ENCODE measurements at regions of chr11 and their contacts with region 1.

Region 1: DNA sequence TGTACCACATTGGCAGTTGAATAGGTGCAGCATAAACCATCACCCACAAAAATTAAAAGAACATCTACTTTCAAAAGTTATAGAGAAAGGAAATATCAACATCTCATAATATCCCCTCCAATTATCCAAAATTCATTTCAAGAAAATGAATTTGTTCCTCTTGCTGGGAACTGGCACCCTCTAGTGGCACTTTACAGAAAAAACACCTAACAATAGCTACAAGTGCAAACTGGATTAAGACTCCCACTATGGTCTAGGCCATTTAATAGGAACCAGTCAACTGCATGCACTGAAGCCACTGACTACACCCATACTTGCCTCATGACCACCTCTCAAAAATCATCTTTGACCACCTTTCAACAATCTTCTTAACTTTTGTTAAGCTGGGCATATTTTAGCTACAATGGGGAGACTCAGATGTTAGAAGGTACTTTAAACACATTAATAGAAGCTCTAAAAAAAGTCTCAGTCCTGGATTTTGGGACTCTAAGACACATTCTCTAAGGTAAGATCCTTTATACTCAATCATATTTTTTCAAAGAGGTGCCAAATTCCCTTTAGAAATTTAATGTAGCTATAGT is 17.3 kb downstream of the TRAF6 start:
- DNase-seq: peak; percentile 45 to 71 (median 52)
- ATAC-seq: peak; percentile 83
- H3K4me3 ChIP-seq: no peak overlapping the region
- H3K27ac ChIP-seq: no peak overlapping the region
- H3K4me1 ChIP-seq: no peaks in the 10 kb centered on the region
- H3K27me3 ChIP-seq: no peaks in the 10 kb centered on the region
- CTCF ChIP-seq: peak; percentile 52 to 81 (median 71); a peak in 5 of 6 replicates
- EP300 ChIP-seq: no peak
- POLR2A ChIP-seq: no peak
- RAD21 ChIP-seq: peak; percentile 64 to 81

Region 2: GRCh38 chr11:36306888-36307287 is 185.9 kb before region 1 on chr11:
- CTCF ChIA-PET with region 1: interaction called, 3 read pairs
- POLR2A ChIA-PET with region 1: no interaction called
- in situ Hi-C with region 1: loop called (anchors 5 kb)
- intact Hi-C with region 1: loop called (anchors 5 kb)
- DNase-seq: peak in 1 of 4 experiments; percentile 31
- ATAC-seq: 0 out of 3 replicates have a peak, but pooled peaks have one; percentile 31
- H3K4me3 ChIP-seq: no peak overlapping the region
- H3K27ac ChIP-seq: no peak overlapping the region
- H3K4me1 ChIP-seq: no peaks in the 10 kb centered on the region
- H3K27me3 ChIP-seq: no peaks in the 10 kb centered on the region
- CTCF ChIP-seq: peak; percentile 28 to 56 (median 36); a peak in 3 of 6 replicates
- EP300 ChIP-seq: no peak
- POLR2A ChIP-seq: no peak
- RAD21 ChIP-seq: peak; percentile 69

Region 3: DNA sequence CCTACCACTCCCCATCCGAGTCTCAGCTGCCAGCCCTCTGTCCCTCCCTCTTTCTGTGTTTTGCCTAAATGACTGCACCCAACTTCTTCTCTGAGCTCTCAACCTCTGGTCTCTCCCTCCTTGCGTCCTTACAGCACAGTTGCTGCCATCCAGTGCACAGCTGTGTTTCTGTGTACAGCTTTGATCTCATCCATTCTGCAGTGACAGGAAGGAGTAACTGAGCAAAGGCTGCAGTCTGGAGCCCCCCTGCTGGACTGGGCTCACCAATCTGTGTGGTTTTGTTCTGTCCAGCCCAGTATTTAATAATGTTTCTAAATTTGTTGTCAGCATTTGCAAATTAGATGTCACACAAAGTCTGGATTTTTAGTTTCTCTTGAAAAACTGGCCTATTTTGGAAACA is 152.9 kb before region 1 on chr11:
- CTCF ChIA-PET with region 1: no interaction called
- POLR2A ChIA-PET with region 1: no interaction called
- in situ Hi-C with region 1: no loop called
- intact Hi-C with region 1: loop called (anchors 1 kb)
- DNase-seq: no peak
- ATAC-seq: no peak
- H3K4me3 ChIP-seq: no peak overlapping the region
- H3K27ac ChIP-seq: no peak overlapping the region
- H3K4me1 ChIP-seq: no peaks in the 10 kb centered on the region
- H3K27me3 ChIP-seq: peaks cover 9 to 31% of the 10 kb centered on the region in 2 experiments; a peak in 3 of 5 replicates
- CTCF ChIP-seq: no peak
- EP300 ChIP-seq: no peak
- POLR2A ChIP-seq: no peak
- RAD21 ChIP-seq: no peak

Region 4: GRCh38 chr11:36385121-36385970 is 107.5 kb before region 1 on chr11:
- CTCF ChIA-PET with region 1: no interaction called
- POLR2A ChIA-PET with region 1: no interaction called
- in situ Hi-C with region 1: no loop called
- intact Hi-C with region 1: no loop called
- DNase-seq: no peak
- ATAC-seq: no peak
- H3K4me3 ChIP-seq: no peak overlapping the region
- H3K27ac ChIP-seq: no peak overlapping the region
- H3K4me1 ChIP-seq: peaks cover 0 to 4% of the 10 kb centered on the region in 2 experiments; a peak in 1 of 5 replicates
- H3K27me3 ChIP-seq: peaks cover 0 to 5% of the 10 kb centered on the region in 2 experiments
- CTCF ChIP-seq: no peak
- EP300 ChIP-seq: no peak
- POLR2A ChIP-seq: no peak
- RAD21 ChIP-seq: no peak

Region 5: GRCh38 chr11:36398231-36398953 is 94.4 kb before region 1 on chr11:
- CTCF ChIA-PET with region 1: no interaction called
- POLR2A ChIA-PET with region 1: no interaction called
- in situ Hi-C with region 1: no loop called
- intact Hi-C with region 1: no loop called
- DNase-seq: peak in 2 of 4 experiments; percentile 14 to 24
- ATAC-seq: peak; percentile 76
- H3K4me3 ChIP-seq: no peak overlapping the region
- H3K27ac ChIP-seq: peak overlapping the region; percentile 5; the same call in 1 of the 3 replicates
- H3K4me1 ChIP-seq: peaks cover 0 to 4% of the 10 kb centered on the region in 2 experiments; a peak in 2 of 5 replicates
- H3K27me3 ChIP-seq: no peaks in the 10 kb centered on the region
- CTCF ChIP-seq: no peak
- EP300 ChIP-seq: no peak
- POLR2A ChIP-seq: no peak
- RAD21 ChIP-seq: no peak

Region 6: DNA sequence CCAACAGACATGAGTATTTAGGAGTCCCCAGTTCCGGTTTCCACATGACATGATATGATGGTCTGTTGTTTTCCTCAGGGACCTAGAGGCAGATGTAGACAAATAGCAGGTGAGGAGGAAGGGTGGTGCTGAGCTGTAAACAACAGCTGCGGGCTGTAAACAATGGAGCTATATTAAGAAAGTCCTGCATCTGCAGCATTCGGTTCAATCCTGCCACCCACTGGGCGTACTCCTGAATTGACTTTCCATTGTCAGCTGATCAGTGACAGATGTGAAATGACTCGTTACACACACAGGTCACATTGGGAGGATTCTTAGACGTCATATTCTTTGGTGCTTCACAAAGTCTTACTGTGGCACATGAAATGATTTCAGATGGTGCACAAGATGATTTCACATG is 48.2 kb after region 1 on chr11:
- CTCF ChIA-PET with region 1: no interaction called
- POLR2A ChIA-PET with region 1: no interaction called
- in situ Hi-C with region 1: no loop called
- intact Hi-C with region 1: loop called (anchors 2 kb)
- DNase-seq: peak in 3 of 4 experiments; percentile 16 to 60 (median 25)
- ATAC-seq: peak; percentile 91
- H3K4me3 ChIP-seq: no peak overlapping the region
- H3K27ac ChIP-seq: no peak overlapping the region
- H3K4me1 ChIP-seq: no peaks in the 10 kb centered on the region
- H3K27me3 ChIP-seq: peaks cover 0 to 6% of the 10 kb centered on the region in 2 experiments; a peak in 2 of 5 replicates
- CTCF ChIP-seq: peak; percentile 55 to 72 (median 62)
- EP300 ChIP-seq: no peak
- POLR2A ChIP-seq: no peak
- RAD21 ChIP-seq: peak; percentile 66 to 75

Region 7: DNA sequence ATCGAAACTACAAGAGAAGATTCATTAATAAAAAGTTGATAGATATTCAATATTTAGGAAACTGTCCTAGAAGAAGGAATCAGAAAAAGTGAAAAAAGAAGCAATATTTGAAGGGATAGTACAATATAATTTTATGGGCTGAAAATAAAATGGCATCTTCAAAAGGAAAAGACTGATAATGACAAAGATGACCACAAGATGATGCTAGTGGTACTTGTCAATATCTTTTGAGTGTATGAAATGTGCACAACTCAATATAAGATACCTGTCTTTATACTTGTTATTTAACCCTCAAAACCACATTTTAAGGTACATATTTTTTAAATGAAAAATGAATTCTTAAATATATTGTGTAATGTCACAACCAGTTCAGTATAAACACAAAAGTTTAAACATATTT is 1164.8 kb after region 1 on chr11:
- CTCF ChIA-PET with region 1: no interaction called
- POLR2A ChIA-PET with region 1: no interaction called
- in situ Hi-C with region 1: no loop called
- intact Hi-C with region 1: no loop called
- DNase-seq: no peak
- ATAC-seq: no peak
- H3K4me3 ChIP-seq: no peak overlapping the region
- H3K27ac ChIP-seq: no peak overlapping the region
- H3K4me1 ChIP-seq: no peaks in the 10 kb centered on the region
- H3K27me3 ChIP-seq: no peaks in the 10 kb centered on the region
- CTCF ChIP-seq: peak in 1 of 3 experiments; percentile 25; a peak in 1 of 6 replicates
- EP300 ChIP-seq: no peak
- POLR2A ChIP-seq: no peak
- RAD21 ChIP-seq: peak; percentile 18 to 37; a peak in 3 of 4 replicates